ENCODE measurements at regions of chr14 and their contacts with region 1.

Region 1: GRCh38 chr14:60248697-60249318 is at the start of gene PPM1A:
- DNase-seq: peak; percentile 73
- ATAC-seq: peak; percentile 69
- H3K4me3 ChIP-seq: peak within 1 kb of the TSS; percentile 87
- H3K27ac ChIP-seq: peak within 1 kb of the TSS; percentile 100
- H3K4me1 ChIP-seq: peaks cover 13% of the 10 kb centered on the region
- H3K27me3 ChIP-seq: no peaks in the 10 kb centered on the region
- CTCF ChIP-seq: no peak
- EP300 ChIP-seq: peak; percentile 57 to 60
- POLR2A ChIP-seq: peak; percentile 90
- RAD21 ChIP-seq: no peak
- polyA plus RNA-seq, gene PPM1A: 49.0 to 58.6 TPM

Region 2: DNA sequence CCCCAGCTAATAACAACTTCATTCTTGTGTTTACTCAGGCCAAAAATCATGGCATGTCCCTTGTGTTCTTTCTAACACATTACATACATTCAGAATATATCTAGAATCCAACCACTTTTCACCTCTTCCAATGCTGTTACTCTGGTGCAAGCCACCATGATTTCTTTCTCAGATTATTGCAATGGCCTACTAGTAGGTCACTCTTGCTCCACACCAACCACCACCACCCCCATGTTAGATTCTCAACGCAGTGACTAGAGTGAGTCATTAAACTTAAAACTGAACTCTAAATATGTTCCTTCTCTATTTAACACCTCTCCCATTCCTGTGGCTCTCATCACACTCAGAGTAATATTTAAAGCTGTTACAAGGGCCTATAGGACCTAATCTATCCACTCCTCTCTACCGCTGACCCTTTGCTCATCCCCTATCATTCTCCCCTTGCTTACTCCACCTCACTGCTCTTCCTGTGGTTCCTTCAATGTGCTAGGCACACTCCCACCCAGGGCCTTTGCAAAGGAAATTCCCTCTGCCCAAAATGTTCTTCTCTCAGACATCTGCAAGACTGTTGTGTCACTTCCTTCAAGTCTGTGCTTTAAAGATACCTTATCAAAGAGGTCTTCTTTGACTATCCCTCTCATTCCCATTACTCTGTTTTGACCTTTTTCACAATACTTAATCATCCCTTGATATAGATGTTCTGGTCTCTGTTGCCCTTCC is 384.8 kb before region 1 on chr14:
- CTCF ChIA-PET with region 1: no interaction called
- POLR2A ChIA-PET with region 1: no interaction called
- RAD21 ChIA-PET with region 1: no interaction called
- SMC1A ChIA-PET with region 1: no interaction called
- in situ Hi-C with region 1: no loop called
- intact Hi-C with region 1: no loop called
- DNase-seq: no peak
- ATAC-seq: no peak
- H3K4me3 ChIP-seq: no peak overlapping the region
- H3K27ac ChIP-seq: no peak overlapping the region
- H3K4me1 ChIP-seq: no peaks in the 10 kb centered on the region
- H3K27me3 ChIP-seq: no peaks in the 10 kb centered on the region
- CTCF ChIP-seq: no peak
- EP300 ChIP-seq: no peak
- POLR2A ChIP-seq: no peak
- RAD21 ChIP-seq: no peak

Region 3: DNA sequence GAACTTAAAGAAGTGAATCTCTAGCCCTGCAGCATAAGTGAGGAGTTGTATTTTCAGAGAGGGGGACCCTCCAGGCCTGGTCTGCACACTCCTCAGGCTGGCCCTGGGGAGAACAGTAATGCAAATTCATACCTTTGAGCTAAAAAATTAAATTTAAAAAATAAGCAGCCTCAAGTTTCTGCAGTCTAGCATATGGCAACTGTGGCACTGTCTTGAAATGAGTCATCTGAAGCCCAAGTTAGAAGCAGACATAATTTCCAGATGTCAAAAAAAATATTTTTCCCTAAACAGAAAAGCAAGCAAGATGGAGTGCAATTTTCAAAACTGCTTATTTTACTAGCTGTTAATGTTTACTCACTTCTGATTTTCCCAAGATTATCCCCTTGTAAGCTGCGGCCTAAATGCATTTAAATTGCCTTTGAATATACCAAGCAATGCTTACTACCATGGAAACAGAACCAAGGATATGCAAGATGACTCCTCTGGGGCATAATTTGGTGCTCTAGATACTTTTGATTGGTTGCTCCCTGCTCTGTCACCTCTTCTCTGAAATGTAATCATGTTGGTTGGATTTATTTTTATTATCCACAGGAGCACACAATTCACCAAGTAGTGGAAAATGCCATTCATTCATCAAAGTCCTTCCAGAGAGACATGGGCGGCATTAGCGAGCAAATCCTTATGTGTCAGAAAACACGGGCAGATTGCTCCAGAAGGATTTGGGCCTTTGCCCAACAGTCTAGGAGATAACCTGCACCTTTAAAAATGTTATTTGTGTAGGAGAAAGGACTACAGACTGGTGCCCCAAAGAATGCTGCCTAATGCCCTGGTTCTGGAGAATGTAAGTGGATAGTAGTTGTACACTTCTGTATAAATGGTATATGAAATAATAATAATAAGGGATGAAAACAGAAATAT is 58.6 kb before region 1 on chr14:
- CTCF ChIA-PET with region 1: interaction called, 6 read pairs
- POLR2A ChIA-PET with region 1: interaction called, 8 read pairs
- RAD21 ChIA-PET with region 1: interaction called, 25 read pairs
- SMC1A ChIA-PET with region 1: interaction called, 52 read pairs
- in situ Hi-C with region 1: no loop called
- intact Hi-C with region 1: no loop called
- DNase-seq: no peak
- ATAC-seq: peak; percentile 69
- H3K4me3 ChIP-seq: no peak overlapping the region
- H3K27ac ChIP-seq: peak overlapping the region; percentile 8; the same call in 1 of the 2 replicates
- H3K4me1 ChIP-seq: peaks cover 10% of the 10 kb centered on the region; the same call in 1 of the 2 replicates
- H3K27me3 ChIP-seq: no peaks in the 10 kb centered on the region
- CTCF ChIP-seq: no peak
- EP300 ChIP-seq: no peak
- POLR2A ChIP-seq: no peak
- RAD21 ChIP-seq: no peak

Region 4: DNA sequence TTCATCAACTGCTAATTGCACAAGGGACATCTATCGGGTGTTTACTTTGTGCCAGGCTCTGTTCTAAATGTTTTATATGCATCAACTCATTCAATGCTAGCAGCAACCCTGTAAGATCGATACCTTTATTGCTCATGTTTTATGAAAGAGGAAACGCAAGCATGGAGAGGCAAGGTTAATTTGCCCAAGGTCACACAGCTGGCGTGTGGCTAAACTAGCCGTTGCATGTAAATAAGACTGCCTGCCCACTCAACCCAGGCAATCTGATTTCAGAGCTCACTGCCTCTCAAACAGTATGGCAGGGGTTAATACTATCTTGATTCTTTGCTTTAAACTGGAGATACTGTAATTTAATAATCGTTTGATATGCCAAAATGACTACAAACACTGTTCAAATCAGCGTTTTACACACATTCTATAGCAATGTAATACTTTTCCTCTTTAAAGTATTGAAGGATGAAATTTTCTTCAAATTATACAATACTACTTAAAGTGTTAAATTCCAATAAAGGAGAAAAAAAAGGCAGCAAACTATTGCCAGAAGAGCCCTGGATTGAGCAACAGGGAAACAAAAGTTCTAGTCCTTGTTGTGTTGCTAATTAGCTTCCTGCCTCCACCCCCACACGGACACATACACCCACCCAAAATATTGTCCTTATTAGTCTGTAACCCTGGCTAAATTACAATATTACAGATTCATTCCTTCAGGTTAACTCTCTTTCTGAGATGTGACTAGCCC is 44.5 kb before region 1 on chr14:
- CTCF ChIA-PET with region 1: interaction called, 42 read pairs
- POLR2A ChIA-PET with region 1: interaction called, 251 read pairs
- RAD21 ChIA-PET with region 1: interaction called, 446 read pairs
- SMC1A ChIA-PET with region 1: interaction called, 303 read pairs
- in situ Hi-C with region 1: no loop called
- intact Hi-C with region 1: no loop called
- DNase-seq: peak; percentile 90
- ATAC-seq: peak; percentile 78
- H3K4me3 ChIP-seq: peak overlapping the region; percentile 43; the same call in 1 of the 2 replicates
- H3K27ac ChIP-seq: peak overlapping the region; percentile 91
- H3K4me1 ChIP-seq: peaks cover 44% of the 10 kb centered on the region
- H3K27me3 ChIP-seq: no peaks in the 10 kb centered on the region
- CTCF ChIP-seq: no peak
- EP300 ChIP-seq: peak; percentile 77 to 88; a peak in 3 of 4 replicates
- POLR2A ChIP-seq: no peak
- RAD21 ChIP-seq: no peak

Region 5: DNA sequence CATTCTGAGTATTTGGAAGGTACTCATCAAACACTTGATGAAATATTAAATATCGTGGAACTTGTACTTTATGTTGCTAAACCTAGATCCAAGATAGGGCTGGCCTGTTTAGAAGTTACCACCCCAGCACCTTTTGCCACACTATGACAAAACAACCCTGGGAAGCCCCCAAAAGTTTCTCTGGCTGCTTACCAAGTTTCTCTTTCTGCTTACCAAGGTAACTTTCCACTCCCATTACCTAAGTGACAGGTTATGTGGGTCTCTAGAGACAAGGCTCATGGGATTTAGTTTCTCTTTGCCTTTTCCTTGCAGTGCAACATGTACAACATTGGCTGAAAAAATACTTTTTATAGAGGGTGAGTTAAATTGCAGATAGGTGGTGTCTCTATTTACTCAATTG is 28.7 kb before region 1 on chr14:
- CTCF ChIA-PET with region 1: interaction called, 38 read pairs
- POLR2A ChIA-PET with region 1: interaction called, 251 read pairs
- RAD21 ChIA-PET with region 1: interaction called, 446 read pairs
- SMC1A ChIA-PET with region 1: interaction called, 303 read pairs
- in situ Hi-C with region 1: no loop called
- intact Hi-C with region 1: no loop called
- DNase-seq: peak; percentile 82
- ATAC-seq: peak; percentile 72
- H3K4me3 ChIP-seq: no peak overlapping the region
- H3K27ac ChIP-seq: peak overlapping the region; percentile 49
- H3K4me1 ChIP-seq: peaks cover 28% of the 10 kb centered on the region
- H3K27me3 ChIP-seq: no peaks in the 10 kb centered on the region
- CTCF ChIP-seq: no peak
- EP300 ChIP-seq: no peak
- POLR2A ChIP-seq: no peak
- RAD21 ChIP-seq: no peak

Region 6: DNA sequence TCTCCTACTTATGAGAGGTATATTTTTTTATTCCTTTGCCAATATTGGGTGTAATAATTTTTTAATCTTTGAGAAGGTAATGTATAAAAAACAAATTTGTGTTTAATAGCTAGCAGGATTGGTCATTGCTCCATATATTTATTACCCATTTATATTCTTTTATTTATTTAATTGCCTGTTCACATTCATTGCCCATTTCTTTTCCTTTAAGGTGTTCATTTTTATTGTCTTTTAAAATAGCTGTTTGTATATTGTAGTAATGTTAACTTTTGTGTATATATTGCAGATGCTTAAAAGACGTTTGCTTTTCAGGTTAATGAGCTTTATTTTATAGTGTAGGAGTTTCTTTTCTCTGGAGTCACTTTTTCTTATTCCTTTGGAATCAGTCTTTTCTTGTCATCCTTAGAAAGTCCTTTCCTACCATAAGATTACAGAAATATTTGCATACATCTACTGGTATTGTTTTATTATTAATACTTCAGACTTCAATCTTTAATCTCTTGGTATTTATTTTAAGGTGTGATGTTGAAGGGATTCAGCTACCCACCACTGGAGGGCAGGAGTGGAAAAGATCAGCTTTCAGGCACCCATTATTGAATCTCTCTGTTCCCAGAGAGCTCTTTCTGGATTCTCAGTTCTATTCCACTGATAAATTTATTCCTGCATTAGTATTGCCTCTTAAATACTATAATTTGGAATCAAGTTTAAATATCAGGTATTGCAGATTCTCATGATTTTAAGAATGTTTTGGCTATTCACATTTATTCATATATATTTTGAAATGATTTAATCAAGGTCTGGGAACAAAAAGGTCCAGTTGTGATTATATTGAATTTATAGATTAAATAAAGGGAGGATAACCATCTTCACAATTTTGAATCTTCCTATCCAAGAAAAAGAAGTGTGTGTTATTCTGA is 17.5 kb after region 1 on chr14:
- CTCF ChIA-PET with region 1: interaction called, 12 read pairs
- POLR2A ChIA-PET with region 1: interaction called, 4 read pairs
- RAD21 ChIA-PET with region 1: interaction called, 4 read pairs
- SMC1A ChIA-PET with region 1: interaction called, 47 read pairs
- in situ Hi-C with region 1: no loop called
- intact Hi-C with region 1: no loop called
- DNase-seq: no peak
- ATAC-seq: peak; percentile 46; the same call in 2 of the 3 replicates
- H3K4me3 ChIP-seq: no peak overlapping the region
- H3K27ac ChIP-seq: no peak overlapping the region
- H3K4me1 ChIP-seq: no peaks in the 10 kb centered on the region
- H3K27me3 ChIP-seq: no peaks in the 10 kb centered on the region
- CTCF ChIP-seq: peak; percentile 1 to 22 (median 14); a peak in 1 of 6 replicates
- EP300 ChIP-seq: no peak
- POLR2A ChIP-seq: no peak
- RAD21 ChIP-seq: no peak